ENCODE measurements at regions of chr7 and their contacts with region 1.

Region 1: GRCh38 chr7:156473476-156474240 is 166.9 kb upstream of the RNF32 start:
- DNase-seq: peak; percentile 30
- H3K4me3 ChIP-seq: no peak overlapping the region
- H3K27ac ChIP-seq: no peak overlapping the region
- H3K4me1 ChIP-seq: no peaks in the 10 kb centered on the region
- H3K27me3 ChIP-seq: no peaks in the 10 kb centered on the region
- CTCF ChIP-seq: peak; percentile 53

Region 2: GRCh38 chr7:155418941-155419755 is 1054.5 kb before region 1 on chr7:
- intact Hi-C with region 1: no loop called
- DNase-seq: no peak
- H3K4me3 ChIP-seq: no peak overlapping the region
- H3K27ac ChIP-seq: no peak overlapping the region
- H3K4me1 ChIP-seq: no peaks in the 10 kb centered on the region
- H3K27me3 ChIP-seq: no peaks in the 10 kb centered on the region
- CTCF ChIP-seq: no peak

Region 3: GRCh38 chr7:155796381-155797261 is 677.0 kb before region 1 on chr7:
- intact Hi-C with region 1: loop called (anchors 5 kb)
- DNase-seq: peak; percentile 63
- H3K4me3 ChIP-seq: no peak overlapping the region
- H3K27ac ChIP-seq: no peak overlapping the region
- H3K4me1 ChIP-seq: no peaks in the 10 kb centered on the region
- H3K27me3 ChIP-seq: no peaks in the 10 kb centered on the region
- CTCF ChIP-seq: peak; percentile 82

Region 4: DNA sequence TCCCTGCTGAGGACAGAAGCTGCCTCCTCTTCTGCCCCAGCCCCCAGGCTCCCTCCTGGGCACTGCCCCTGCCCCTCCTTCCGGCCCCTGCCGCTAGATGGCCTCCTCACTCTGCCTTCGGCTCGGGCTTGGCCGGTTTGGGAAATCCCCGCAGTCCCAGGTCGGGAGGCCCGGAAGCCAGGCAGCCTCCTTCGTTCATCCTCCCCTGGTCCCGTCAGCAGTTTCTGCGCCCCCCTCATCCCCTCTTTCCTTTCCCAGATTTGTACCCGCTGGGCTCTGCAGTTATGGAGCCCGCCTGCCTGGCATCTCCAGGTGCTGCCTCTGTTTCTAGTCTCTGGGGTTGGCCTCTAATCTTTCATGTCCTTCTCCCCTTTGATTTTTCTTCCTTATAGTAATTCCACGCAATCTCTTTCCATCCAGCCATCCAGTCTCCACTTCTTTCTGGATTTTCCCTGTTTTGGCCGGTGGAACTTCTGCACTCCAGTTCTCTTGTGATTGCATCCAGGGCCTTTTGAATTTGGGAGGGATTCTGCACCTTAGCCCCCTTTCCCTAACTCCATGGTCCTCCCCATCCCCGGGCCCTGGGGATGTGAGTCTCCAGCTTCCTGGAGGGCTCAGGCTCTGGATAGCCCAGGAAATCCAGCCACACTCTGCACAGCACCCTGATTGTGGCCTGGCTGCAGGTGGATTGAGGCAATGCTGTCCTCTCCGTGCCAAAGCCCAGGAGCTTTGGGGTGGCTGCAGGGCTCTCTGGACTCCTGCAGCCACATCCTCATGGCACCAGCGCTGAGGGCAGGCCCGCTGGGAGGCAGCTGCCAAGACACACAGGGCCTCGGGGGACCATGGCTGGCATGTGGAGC is 658.1 kb before region 1 on chr7:
- intact Hi-C with region 1: loop called (anchors 5 kb)
- DNase-seq: peak; percentile 82
- H3K4me3 ChIP-seq: no peak overlapping the region
- H3K27ac ChIP-seq: no peak overlapping the region
- H3K4me1 ChIP-seq: no peaks in the 10 kb centered on the region
- H3K27me3 ChIP-seq: peaks cover 29% of the 10 kb centered on the region
- CTCF ChIP-seq: peak; percentile 70

Region 5: GRCh38 chr7:156419782-156420181 is 53.9 kb before region 1 on chr7:
- intact Hi-C with region 1: no loop called
- DNase-seq: no peak
- H3K4me3 ChIP-seq: no peak overlapping the region
- H3K27ac ChIP-seq: no peak overlapping the region
- H3K4me1 ChIP-seq: no peaks in the 10 kb centered on the region
- H3K27me3 ChIP-seq: no peaks in the 10 kb centered on the region
- CTCF ChIP-seq: no peak